ENCODE measurements at regions of chr7 and their contacts with region 1.

Region 1: GRCh38 chr7:120987683-120988590 is 574 bp upstream of the CPED1 start:
- DNase-seq: peak; percentile 92
- H3K4me3 ChIP-seq: peak overlapping the region; percentile 38
- H3K27ac ChIP-seq: no peak overlapping the region
- H3K4me1 ChIP-seq: peaks cover 22% of the 10 kb centered on the region
- H3K27me3 ChIP-seq: no peaks in the 10 kb centered on the region
- CTCF ChIP-seq: peak; percentile 98

Region 2: DNA sequence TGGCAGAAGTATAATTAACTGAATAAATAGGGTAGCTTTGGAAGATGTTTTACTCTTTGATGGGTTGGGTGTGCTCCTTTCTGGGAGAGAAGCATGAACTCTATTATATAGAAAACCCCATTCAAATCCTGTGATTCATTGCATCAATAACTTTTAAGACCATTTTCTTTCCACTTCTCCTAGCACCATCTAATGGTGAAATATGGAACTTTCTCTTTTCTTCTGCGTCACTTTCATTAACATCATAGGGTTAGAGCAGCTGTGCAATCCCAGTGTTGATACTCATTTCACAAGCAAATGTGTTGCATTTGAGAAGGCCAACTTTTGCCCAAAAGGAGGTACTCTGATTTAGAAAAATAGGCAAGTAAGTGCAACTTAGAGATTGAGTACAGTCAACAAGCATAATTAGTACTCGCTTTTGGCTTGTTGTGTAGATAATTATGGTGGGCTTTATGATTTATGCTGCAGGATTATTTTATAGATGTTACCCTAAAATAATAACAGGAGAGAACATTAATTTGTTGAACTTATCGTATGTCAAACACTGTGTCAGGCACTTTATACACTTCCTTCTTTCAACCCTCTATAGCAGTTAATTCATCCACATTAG is 93.5 kb after region 1 on chr7:
- CTCF ChIA-PET with region 1: interaction called, 3 read pairs
- POLR2A ChIA-PET with region 1: no interaction called
- intact Hi-C with region 1: loop called (anchors 1 kb)
- DNase-seq: peak; percentile 77
- H3K4me3 ChIP-seq: no peak overlapping the region
- H3K27ac ChIP-seq: no peak overlapping the region
- H3K4me1 ChIP-seq: no peaks in the 10 kb centered on the region
- H3K27me3 ChIP-seq: no peaks in the 10 kb centered on the region
- CTCF ChIP-seq: peak; percentile 71

Region 3: DNA sequence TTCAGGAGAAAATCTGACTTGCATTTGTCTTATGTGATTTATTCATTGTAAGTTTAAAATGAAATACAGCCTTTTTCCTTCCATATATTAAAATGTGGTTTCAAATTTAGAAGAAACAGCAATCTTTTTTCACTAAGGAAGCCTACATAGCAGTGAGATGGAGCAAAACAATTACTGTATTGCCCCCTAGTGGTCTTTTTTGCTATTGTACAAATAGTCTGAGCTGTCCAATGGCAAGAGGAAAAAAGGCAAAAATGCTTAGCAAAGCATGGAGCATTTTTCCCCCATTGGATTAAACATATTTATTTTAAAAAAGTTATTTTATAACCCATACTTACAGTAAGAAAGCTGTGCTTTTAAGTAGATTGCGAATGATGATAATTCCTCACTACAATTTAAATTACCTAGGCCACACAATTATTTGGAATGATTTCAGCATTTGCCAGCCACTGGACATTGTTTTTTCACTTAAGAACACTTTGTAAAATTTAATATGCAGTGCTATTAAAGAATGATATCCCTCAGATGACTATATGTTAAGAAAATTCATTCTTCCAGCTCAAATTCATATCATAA is 120.1 kb after region 1 on chr7:
- CTCF ChIA-PET with region 1: interaction called, 12 read pairs
- POLR2A ChIA-PET with region 1: no interaction called
- intact Hi-C with region 1: loop called (anchors 1 kb)
- DNase-seq: peak; percentile 70
- H3K4me3 ChIP-seq: no peak overlapping the region
- H3K27ac ChIP-seq: no peak overlapping the region
- H3K4me1 ChIP-seq: no peaks in the 10 kb centered on the region
- H3K27me3 ChIP-seq: no peaks in the 10 kb centered on the region
- CTCF ChIP-seq: peak; percentile 78

Region 4: DNA sequence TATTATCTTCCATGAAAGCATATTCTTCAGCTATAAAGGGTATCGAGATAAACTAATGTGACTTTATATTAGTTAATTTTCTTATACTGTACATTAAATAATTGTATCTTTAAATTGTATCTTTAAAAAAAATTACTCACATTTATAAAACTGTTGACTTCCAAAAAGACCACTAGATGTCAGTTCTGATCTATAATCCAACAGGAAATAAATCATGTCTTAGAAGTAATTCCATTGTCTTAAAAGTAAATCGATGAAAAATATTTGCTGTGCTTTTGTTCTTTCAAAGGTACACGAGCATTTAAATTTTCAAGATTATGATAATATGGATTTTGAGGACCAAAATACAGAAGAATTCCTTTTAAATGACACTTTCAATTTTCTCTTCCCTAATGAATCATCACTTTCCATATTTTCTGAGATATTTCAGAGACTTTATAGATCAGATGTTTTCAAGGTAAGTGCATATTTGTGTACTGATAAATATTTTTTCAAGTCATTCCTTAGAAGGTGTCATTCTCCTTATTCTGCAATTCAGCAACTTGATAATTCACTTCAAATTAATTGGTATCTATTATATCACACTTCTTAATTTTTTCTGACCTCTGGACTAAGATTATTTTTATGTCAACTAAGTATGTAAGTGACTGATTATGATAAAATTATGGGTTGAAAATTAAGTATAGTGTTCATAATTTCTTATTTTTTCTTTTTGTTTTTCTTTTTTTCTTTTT is 139.0 kb after region 1 on chr7:
- CTCF ChIA-PET with region 1: no interaction called
- POLR2A ChIA-PET with region 1: no interaction called
- intact Hi-C with region 1: no loop called
- DNase-seq: peak; percentile 28
- H3K4me3 ChIP-seq: no peak overlapping the region
- H3K27ac ChIP-seq: no peak overlapping the region
- H3K4me1 ChIP-seq: peaks cover 10% of the 10 kb centered on the region
- H3K27me3 ChIP-seq: no peaks in the 10 kb centered on the region
- CTCF ChIP-seq: peak; percentile 57; the same call in 1 of the 2 replicates

Region 5: GRCh38 chr7:121329191-121330052 is 341.5 kb after region 1 on chr7:
- CTCF ChIA-PET with region 1: no interaction called
- POLR2A ChIA-PET with region 1: no interaction called
- intact Hi-C with region 1: loop called (anchors 10 kb)
- DNase-seq: no peak
- H3K4me3 ChIP-seq: peak overlapping the region; percentile 27
- H3K27ac ChIP-seq: no peak overlapping the region
- H3K4me1 ChIP-seq: peaks cover 15% of the 10 kb centered on the region
- H3K27me3 ChIP-seq: peaks cover 78% of the 10 kb centered on the region
- CTCF ChIP-seq: no peak

Measured in A673 (cell line).